Gastrocnemius medialis (tissue), 4 donors: ENCODE measurements at regions of chr16 and their contacts with region 1.

Region 1: GRCh38 chr16:20300312-20301097 is 26.8 kb downstream of the GP2 start:
- DNase-seq: no peak
- ATAC-seq: no peak
- H3K4me3 ChIP-seq: no peak overlapping the region
- H3K27ac ChIP-seq: no peak overlapping the region
- H3K4me1 ChIP-seq: no peaks in the 10 kb centered on the region
- H3K27me3 ChIP-seq: no peaks in the 10 kb centered on the region
- CTCF ChIP-seq: peak in 3 of 5 experiments; percentile 24 to 51 (median 41)
- POLR2A ChIP-seq: no peak

Region 2: DNA sequence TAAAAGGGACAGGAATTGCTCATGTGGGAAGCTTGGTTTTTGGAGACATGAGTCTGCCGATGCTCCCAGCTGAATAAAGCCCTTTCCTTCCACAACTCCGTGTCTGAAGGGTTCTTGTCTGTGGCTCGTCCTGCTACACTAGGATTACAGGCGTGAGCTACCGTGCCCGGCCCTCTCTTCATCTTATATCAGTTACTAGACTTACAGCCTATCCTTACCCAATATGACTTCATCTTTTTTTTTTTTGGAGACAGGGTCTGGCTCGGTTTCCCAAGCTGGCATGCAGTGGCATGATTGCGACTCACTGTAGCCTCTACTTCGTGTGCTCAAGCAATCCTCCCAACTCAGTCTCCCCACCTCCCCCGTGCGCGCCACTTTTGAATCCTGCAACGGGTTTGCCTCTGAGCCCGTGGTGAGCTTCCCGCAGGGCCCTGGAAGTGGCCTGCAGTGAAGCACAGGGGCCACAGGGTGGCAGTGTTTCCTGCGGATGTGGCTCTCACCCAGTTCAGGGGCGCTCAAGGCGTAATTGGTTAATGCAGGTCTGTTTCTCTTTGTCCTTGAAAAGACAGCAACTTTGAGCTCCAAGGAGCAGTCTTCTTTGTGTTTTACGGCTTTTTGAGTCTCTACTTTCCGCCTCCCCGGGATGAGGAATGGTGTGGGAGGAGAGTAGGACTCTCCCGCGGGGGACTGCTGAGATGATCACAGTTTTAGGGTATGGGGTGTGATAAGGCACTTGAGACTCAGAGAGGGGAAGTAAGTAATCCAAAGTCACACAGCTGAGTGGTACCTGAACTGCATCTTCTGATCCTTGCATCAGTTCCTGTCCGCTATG is 393.1 kb before region 1 on chr16:
- in situ Hi-C with region 1: loop called in 1 of 4 experiments (anchors 5 kb)
- intact Hi-C with region 1: loop called (anchors 2 kb)
- DNase-seq: peak in 1 of 2 donors; percentile 23
- ATAC-seq: peak; percentile 52 to 77
- H3K4me3 ChIP-seq: no peak overlapping the region
- H3K27ac ChIP-seq: no peak overlapping the region
- H3K4me1 ChIP-seq: no peaks in the 10 kb centered on the region
- H3K27me3 ChIP-seq: peaks cover 0 to 2% (median 0%) of the 10 kb centered on the region in 3 donors
- CTCF ChIP-seq: peak; percentile 51 to 88 (median 77)
- POLR2A ChIP-seq: no peak

Region 3: DNA sequence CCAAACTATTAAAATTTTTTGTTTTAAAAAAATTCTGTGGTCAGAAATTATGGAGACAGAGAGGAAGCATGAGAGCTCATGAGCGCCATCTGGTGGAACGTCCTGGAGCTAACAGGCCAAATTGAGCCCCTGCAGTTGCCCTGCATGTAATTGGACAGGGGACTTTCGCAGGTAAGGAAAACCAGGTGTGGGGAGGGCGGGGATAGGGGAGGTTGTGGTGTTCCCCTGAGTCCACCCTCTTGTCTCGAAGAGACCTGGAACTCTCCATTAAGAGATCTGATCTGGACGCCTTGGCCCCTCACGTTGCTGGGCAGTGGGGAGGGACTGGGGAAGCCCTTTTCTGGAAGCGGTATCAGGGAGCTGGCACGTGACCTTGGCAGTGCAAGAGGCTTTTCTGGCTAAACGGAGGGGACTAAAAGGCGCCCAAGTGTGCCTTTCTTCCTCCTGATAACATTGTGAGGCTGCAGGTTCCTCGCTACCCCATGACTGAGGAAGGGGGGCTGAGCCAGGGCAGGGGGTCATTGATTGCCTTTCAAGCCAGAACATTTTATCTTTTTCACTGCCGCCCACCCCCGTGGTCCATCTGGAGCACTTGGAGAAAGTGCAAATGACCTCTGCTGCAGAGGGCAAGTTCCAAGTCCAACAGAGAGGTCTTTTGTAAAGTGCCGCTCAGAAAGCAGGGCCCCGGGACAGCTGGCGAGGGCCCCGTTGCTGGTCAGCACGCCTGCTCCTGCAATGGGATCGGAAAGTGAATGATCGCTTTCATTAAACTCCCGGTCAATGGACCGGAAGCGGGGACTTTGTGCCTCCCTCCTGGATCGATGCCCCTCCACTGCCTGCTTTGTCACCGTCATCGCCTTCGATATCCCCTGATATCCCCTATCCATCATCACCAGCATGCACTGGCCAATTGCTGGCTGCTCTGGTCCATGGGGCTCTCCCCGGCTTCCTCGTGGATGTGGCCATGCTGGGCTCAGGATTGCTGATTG is 85.6 kb after region 1 on chr16:
- in situ Hi-C with region 1: no loop called
- intact Hi-C with region 1: no loop called
- DNase-seq: peak; percentile 16 to 29
- ATAC-seq: peak in 1 of 2 donors; percentile 36
- H3K4me3 ChIP-seq: no peak overlapping the region
- H3K27ac ChIP-seq: no peak overlapping the region
- H3K4me1 ChIP-seq: no peaks in the 10 kb centered on the region
- H3K27me3 ChIP-seq: no peaks in the 10 kb centered on the region
- CTCF ChIP-seq: peak; percentile 19 to 75 (median 49)
- POLR2A ChIP-seq: no peak